Activated CD4-positive, alpha-beta memory T cell treated with anti-CD3 and anti-CD28 coated beads for 36 hours (primary cell): ENCODE measurements at regions of chr14 and their contacts with region 1.

Region 1: DNA sequence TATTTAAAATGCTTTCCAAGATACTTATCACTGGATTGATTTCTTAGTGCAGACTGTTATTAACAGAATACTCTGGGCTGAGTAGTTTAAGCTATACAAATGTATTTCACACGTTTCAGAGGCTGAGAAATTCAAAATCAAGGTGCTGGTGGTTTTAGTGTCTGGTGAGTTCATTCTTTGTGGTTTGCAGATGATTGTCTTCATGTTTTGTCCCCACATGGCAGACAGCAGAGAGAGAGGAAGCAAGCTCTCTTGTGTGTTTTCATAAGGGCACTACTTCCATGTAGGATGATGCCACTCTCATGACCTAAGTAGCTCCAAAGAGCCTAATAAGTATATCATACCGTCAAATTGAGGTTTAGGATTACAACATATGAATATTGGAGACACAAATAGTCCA is 1348.9 kb upstream of the FLRT2 start:
- DNase-seq: no peak
- H3K4me3 Mint-ChIP-seq: no peak overlapping the region
- H3K27ac Mint-ChIP-seq: no peak overlapping the region
- H3K4me1 Mint-ChIP-seq: no peaks in the 10 kb centered on the region
- H3K27me3 Mint-ChIP-seq: no peaks in the 10 kb centered on the region

Region 2: DNA sequence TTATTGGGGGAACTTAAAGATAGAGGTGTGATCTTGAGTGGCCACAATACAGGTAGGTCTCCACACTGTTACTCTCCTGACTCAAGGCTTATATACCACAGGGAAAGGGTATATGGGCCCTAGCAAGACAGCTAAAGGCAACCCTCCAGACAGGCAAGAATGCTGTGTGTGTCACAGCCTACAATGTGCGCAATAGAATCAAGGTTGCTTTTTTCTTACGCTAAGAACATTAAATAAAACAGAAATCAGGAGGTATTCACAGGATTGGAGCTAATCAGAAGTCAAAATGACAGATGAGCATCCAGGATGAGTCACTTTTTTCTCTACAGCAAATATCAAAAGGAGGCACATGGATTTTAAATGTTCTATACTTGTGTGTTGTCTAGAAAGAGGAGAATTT is 849.6 kb before region 1 on chr14:
- CTCF ChIA-PET with region 1: no interaction called
- POLR2A ChIA-PET with region 1: no interaction called
- intact Hi-C with region 1: no loop called
- DNase-seq: no peak
- H3K4me3 Mint-ChIP-seq: no peak overlapping the region
- H3K27ac Mint-ChIP-seq: no peak overlapping the region
- H3K4me1 Mint-ChIP-seq: no peaks in the 10 kb centered on the region
- H3K27me3 Mint-ChIP-seq: no peaks in the 10 kb centered on the region

Region 3: DNA sequence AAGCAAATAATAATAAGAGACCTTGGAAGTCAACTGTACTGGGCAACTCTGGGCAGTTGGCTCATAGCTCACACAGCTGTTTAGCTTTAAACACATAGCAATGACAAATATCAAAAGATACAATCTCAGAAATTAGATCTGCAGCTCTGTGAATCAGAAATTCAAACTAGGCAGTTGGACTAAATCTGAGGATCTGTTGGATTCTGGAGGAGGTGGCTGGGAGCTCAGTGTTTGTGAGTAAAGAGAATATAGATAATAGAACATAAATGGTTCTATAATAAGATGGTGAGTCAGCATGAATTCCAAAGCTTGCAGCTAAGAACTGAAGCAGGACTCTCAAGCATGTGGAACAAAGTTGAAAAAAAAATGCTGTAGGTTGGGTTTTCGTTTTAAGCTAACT is 698.0 kb before region 1 on chr14:
- CTCF ChIA-PET with region 1: no interaction called
- POLR2A ChIA-PET with region 1: no interaction called
- intact Hi-C with region 1: loop called (anchors 5 kb)
- DNase-seq: no peak
- H3K4me3 Mint-ChIP-seq: no peak overlapping the region
- H3K27ac Mint-ChIP-seq: no peak overlapping the region
- H3K4me1 Mint-ChIP-seq: no peaks in the 10 kb centered on the region
- H3K27me3 Mint-ChIP-seq: no peaks in the 10 kb centered on the region

Region 4: GRCh38 chr14:84064316-84065125 is 116.6 kb before region 1 on chr14:
- CTCF ChIA-PET with region 1: no interaction called
- POLR2A ChIA-PET with region 1: no interaction called
- intact Hi-C with region 1: no loop called
- DNase-seq: no peak
- H3K4me3 Mint-ChIP-seq: no peak overlapping the region
- H3K27ac Mint-ChIP-seq: no peak overlapping the region
- H3K4me1 Mint-ChIP-seq: no peaks in the 10 kb centered on the region
- H3K27me3 Mint-ChIP-seq: no peaks in the 10 kb centered on the region